ENCODE measurements at regions of chrX and their contacts with region 1.

Region 1: DNA sequence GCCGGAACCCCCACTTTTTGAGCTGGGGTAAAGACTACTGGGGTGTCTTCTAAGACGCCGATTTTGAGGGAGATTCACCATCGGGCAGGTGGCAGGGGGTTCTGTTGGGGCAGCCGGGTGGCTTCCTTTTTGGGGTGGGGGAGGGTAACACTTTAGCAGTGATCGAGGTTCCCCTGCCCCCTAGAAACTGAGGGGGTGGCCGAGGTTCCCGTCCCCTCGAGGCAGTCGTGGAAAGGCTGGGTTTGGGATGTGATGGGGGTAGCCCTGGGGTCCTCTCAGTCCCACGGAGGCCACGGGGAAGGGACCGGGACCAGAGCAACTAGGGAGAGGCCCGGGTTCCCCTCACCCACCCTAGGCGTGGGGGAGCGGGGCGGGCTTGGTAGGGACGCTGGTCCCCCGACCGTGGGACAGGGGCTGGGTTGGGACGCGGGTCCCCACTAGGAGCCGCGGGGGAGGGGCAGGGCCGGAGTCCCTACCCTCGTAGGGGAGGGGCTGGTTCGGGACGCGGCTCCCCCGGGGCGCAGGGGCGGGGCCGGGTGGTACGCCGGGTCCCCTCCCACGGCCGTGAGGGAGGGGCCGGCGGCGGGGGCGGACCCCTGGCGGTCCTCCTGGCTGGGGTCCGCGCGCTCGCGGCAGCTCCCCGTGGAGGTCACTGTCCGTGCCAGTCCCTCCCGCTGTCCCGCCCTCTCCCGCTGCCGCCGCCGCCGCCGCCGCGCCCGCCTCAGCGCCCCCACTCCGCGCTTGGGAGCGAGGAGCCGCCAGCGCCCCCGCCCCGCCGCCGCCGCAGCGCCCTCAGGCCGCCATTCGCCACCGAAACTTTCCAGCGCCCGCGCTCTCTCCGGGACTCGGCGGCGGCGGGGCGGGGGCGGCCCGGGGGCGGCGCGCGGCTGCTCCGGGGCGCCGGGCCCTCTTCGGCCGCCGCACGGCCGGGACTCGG is at the start of gene TBL1X:
- DNase-seq: peak; percentile 46
- H3K4me3 Mint-ChIP-seq: peak within 1 kb of the TSS; percentile 71
- H3K27ac Mint-ChIP-seq: peak within 1 kb of the TSS; percentile 88
- H3K4me1 Mint-ChIP-seq: peaks cover 43% of the 10 kb centered on the region
- H3K27me3 Mint-ChIP-seq: peaks cover 3% of the 10 kb centered on the region
- total RNA-seq, gene TBL1X: 24.0 and 29.2 TPM in 2 replicates

Region 2: DNA sequence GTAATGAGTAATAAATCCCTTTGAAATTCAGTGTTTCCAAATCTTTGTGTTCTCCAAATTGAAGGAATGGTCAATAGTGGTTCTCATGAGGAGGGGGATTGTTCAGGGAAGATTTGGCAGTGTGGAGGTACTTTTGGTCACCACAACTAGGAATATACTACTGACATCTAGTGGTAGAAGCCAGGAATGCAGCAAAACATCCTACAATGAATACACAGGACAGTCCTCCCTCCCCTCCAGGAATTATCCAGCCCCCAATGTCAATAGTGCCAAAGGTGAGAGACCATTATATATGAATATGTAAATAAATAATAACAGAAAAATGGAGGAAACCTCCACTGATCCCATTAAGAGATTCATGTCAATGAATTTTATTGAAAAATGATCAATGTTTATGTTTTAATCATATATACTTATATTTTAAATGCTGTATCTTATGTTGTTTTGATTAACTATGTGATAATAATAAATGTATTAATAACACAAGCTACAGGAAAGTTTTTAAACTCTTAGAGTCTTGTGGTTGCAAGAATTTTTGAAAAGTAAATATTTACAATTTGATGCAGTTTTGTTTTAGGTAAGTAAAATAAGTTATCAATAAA is 649.1 kb before region 1 on chrX:
- intact Hi-C with region 1: loop called (anchors 5 kb)
- DNase-seq: peak; percentile 3
- H3K4me3 Mint-ChIP-seq: no peak overlapping the region
- H3K27ac Mint-ChIP-seq: no peak overlapping the region
- H3K4me1 Mint-ChIP-seq: no peaks in the 10 kb centered on the region
- H3K27me3 Mint-ChIP-seq: peaks cover 3% of the 10 kb centered on the region

Region 3: GRCh38 chrX:8971116-8971515 is 493.6 kb before region 1 on chrX:
- intact Hi-C with region 1: loop called (anchors 2 kb)
- DNase-seq: no peak
- H3K4me3 Mint-ChIP-seq: no peak overlapping the region
- H3K27ac Mint-ChIP-seq: no peak overlapping the region
- H3K4me1 Mint-ChIP-seq: peaks cover 6% of the 10 kb centered on the region
- H3K27me3 Mint-ChIP-seq: peaks cover 2% of the 10 kb centered on the region

Region 4: DNA sequence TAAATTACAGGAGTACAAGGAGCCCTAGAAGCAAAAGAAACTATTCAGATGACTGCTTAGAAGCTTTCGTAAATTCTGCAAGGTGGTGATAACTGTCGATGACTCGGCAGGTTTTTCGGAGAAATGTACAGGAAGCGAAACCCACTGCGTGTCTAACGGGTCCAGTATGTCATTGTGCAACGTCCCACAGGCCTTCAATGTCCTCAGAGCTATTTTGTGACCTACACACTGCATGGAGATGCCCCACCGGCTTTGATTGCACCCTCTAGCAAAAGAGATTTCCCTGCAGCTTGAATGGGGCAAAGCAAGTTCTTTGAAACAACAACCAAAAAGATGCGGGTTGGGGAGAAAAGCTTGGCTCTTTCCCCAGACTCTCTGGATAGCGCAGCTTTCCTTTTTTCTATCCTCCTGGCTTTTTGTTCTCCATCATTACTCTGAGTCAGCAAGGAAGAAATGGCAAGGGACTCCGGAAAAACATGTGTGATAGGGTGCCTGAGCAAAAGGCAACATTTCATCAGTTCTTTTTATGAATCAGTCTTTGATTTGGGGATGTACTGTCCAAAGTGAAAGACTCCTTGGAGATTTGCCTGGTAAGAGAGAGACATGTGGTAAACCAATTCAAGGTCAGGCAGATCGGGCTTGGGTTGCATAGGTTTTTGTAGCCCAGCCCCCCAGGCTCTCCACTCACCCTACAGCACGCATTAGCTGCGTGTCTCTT is 111.8 kb before region 1 on chrX:
- intact Hi-C with region 1: loop called (anchors 1 kb)
- DNase-seq: no peak
- H3K4me3 Mint-ChIP-seq: peak overlapping the region; percentile 53
- H3K27ac Mint-ChIP-seq: peak overlapping the region; percentile 77
- H3K4me1 Mint-ChIP-seq: peaks cover 35% of the 10 kb centered on the region
- H3K27me3 Mint-ChIP-seq: no peaks in the 10 kb centered on the region

Region 5: GRCh38 chrX:9370893-9371292 is 93.8 kb before region 1 on chrX:
- intact Hi-C with region 1: no loop called
- DNase-seq: no peak
- H3K4me3 Mint-ChIP-seq: no peak overlapping the region
- H3K27ac Mint-ChIP-seq: no peak overlapping the region
- H3K4me1 Mint-ChIP-seq: peaks cover 10% of the 10 kb centered on the region
- H3K27me3 Mint-ChIP-seq: peaks cover 2% of the 10 kb centered on the region

Region 6: DNA sequence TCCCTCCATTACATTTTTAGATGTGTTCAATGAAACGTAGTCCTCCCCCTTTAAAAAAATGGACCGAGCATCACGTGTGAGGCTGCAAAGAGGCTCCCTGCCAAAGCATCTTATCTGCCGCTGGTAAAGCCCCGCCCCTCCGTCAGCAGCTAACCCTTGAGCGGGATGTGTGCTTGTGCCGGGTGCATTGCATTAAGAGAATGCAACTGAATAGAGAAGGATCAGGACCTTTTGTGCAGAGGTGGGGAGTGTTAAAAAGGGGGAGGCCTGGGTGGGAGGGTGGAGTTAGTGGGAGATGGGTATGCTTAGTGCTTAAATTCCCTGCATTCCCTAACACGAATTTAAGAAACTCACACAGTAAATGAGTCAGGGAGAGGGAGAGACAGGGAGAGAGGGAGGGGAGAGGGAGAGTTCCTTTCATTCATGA is 66.2 kb after region 1 on chrX:
- intact Hi-C with region 1: loop called (anchors 5 kb)
- DNase-seq: peak; percentile 45
- H3K4me3 Mint-ChIP-seq: peak overlapping the region; percentile 49
- H3K27ac Mint-ChIP-seq: peak overlapping the region; percentile 40
- H3K4me1 Mint-ChIP-seq: peaks cover 26% of the 10 kb centered on the region
- H3K27me3 Mint-ChIP-seq: no peaks in the 10 kb centered on the region

Region 7: DNA sequence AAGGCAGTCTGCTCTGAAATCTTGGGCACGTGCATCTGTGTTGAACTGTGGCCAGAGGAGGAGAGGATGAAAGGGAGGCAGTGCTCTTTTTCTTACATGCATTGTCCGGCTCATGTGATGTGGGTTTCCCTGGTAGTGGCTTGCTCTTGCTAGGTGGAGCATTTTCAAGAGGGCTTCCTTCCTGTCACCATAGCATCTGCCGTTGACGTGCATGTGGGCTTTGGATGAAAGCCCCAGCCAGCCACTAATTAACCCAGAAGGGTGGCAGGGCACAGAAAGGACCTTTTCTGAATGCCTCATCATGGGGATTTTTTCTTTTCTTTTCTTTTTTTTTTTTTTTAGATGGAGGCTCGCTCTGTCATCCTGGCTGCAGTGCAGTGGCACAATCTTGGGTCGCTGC is 179.6 kb after region 1 on chrX:
- intact Hi-C with region 1: loop called (anchors 1 kb)
- DNase-seq: peak; percentile 23
- H3K4me3 Mint-ChIP-seq: peak overlapping the region; percentile 26
- H3K27ac Mint-ChIP-seq: peak overlapping the region; percentile 71
- H3K4me1 Mint-ChIP-seq: peaks cover 27% of the 10 kb centered on the region
- H3K27me3 Mint-ChIP-seq: no peaks in the 10 kb centered on the region

Region 8: DNA sequence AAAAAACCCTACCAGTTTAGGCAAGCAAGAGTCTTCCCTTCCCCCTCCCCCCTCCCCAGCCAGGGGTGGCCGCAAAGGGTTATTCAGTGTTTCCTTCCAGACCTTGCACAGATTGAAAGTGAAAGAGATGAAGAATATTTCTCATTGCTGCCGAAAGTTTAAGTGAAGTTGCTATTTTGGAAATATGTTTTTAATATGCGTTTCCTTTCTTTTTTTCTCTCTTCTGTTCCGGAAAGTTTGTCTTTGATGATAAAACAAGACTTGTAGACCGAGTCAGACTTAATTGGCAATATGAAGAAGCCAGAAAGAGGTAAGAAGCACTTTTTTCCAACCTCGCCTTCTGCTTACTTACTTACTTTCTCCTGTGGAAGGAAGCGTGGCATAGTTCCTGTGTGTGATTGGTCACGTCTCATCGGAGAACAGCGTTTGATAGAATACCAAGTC is 633.6 kb after region 1 on chrX:
- intact Hi-C with region 1: loop called (anchors 5 kb)
- DNase-seq: peak; percentile 53
- H3K4me3 Mint-ChIP-seq: peak overlapping the region; percentile 79
- H3K27ac Mint-ChIP-seq: peak overlapping the region; percentile 87
- H3K4me1 Mint-ChIP-seq: peaks cover 34% of the 10 kb centered on the region
- H3K27me3 Mint-ChIP-seq: no peaks in the 10 kb centered on the region